ENCODE measurements at regions of chrX and their contacts with region 1.

Region 1: GRCh38 chrX:48083212-48083611 is 11.8 kb upstream of the ZNF630 start:
- DNase-seq: no peak

Region 2: GRCh38 chrX:48475774-48476577 is 392.8 kb after region 1 on chrX and contains the start of gene FTSJ1:
- intact Hi-C with region 1: loop called (anchors 10 kb)
- DNase-seq: peak; percentile 90
- total RNA-seq, gene FTSJ1: 18.8 TPM